HepG2 (cell line): ENCODE measurements at regions of chr13 and their contacts with region 1.

Region 1: DNA sequence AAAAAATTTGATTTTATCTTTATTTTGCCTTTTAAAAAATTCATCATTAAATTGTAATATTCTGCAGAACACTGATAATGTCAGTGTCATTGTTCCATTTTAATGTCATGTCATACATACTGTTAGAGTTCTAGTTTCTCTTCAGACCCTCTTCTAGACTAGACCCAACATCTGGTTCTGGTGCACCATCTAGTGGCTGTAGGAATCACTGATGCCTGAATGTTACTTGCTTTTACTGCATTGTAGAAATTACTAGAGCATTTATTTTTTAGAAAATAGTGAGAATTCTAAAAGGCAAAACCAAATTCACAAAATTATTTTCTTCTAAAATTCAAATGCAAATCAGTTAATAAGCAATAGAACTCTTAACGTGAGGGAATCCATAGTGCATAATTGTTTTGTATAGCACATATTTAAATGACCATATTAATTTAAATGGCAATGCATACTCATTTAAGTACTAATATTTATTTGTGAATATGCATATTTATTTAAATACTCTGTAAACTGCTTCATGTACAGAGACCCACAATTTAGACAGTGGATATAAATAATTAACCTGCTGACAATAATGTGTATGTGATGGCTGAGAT is 425.7 kb downstream of the KLF12 start:
- DNase-seq: peak; percentile 59
- ATAC-seq: peak; percentile 88
- H3K4me3 ChIP-seq: no peak overlapping the region
- H3K27ac ChIP-seq: no peak overlapping the region
- H3K4me1 ChIP-seq: no peaks in the 10 kb centered on the region
- H3K27me3 ChIP-seq: no peaks in the 10 kb centered on the region
- CTCF ChIP-seq: peak; percentile 79
- EP300 ChIP-seq: no peak
- POLR2A ChIP-seq: no peak
- RAD21 ChIP-seq: peak; percentile 70

Region 2: GRCh38 chr13:72808917-72809500 is 899.5 kb before region 1 on chr13:
- CTCF ChIA-PET with region 1: interaction called, 3 read pairs
- POLR2A ChIA-PET with region 1: no interaction called
- in situ Hi-C with region 1: no loop called
- intact Hi-C with region 1: loop called (anchors 1 kb)
- DNase-seq: peak; percentile 9
- ATAC-seq: no peak
- H3K4me3 ChIP-seq: no peak overlapping the region
- H3K27ac ChIP-seq: no peak overlapping the region
- H3K4me1 ChIP-seq: peaks cover 8% of the 10 kb centered on the region; the same call in 1 of the 2 replicates
- H3K27me3 ChIP-seq: no peaks in the 10 kb centered on the region
- CTCF ChIP-seq: no peak
- EP300 ChIP-seq: no peak
- POLR2A ChIP-seq: no peak
- RAD21 ChIP-seq: no peak

Region 3: GRCh38 chr13:72839831-72840426 is 868.6 kb before region 1 on chr13:
- CTCF ChIA-PET with region 1: interaction called, 18 read pairs
- POLR2A ChIA-PET with region 1: no interaction called
- in situ Hi-C with region 1: loop called (anchors 10 kb)
- intact Hi-C with region 1: loop called (anchors 1 kb)
- DNase-seq: peak; percentile 56
- ATAC-seq: peak; percentile 100
- H3K4me3 ChIP-seq: no peak overlapping the region
- H3K27ac ChIP-seq: no peak overlapping the region
- H3K4me1 ChIP-seq: no peaks in the 10 kb centered on the region
- H3K27me3 ChIP-seq: no peaks in the 10 kb centered on the region
- CTCF ChIP-seq: peak; percentile 83
- EP300 ChIP-seq: no peak
- POLR2A ChIP-seq: no peak
- RAD21 ChIP-seq: peak; percentile 69